Vagina (tissue), 2 donors: ENCODE measurements at regions of chr11 and their contacts with region 1.

Region 1: GRCh38 chr11:73242251-73243079 is 24.4 kb downstream of the P2RY2 start:
- DNase-seq: no peak
- H3K4me3 ChIP-seq: peak overlapping the region; percentile 6 to 15
- H3K27ac ChIP-seq: no peak overlapping the region
- H3K4me1 ChIP-seq: peaks cover 22% of the 10 kb centered on the region
- H3K27me3 ChIP-seq: no peaks in the 10 kb centered on the region
- CTCF ChIP-seq: peak; percentile 60 to 82 (median 78)
- POLR2A ChIP-seq: no peak

Region 2: GRCh38 chr11:73184953-73185671 is 57.4 kb before region 1 on chr11:
- intact Hi-C with region 1: loop called (anchors 5 kb)
- DNase-seq: no peak
- H3K4me3 ChIP-seq: no peak overlapping the region
- H3K27ac ChIP-seq: peak overlapping the region; percentile 56
- H3K4me1 ChIP-seq: peaks cover 25% of the 10 kb centered on the region
- H3K27me3 ChIP-seq: no peaks in the 10 kb centered on the region
- CTCF ChIP-seq: peak; percentile 48 to 70 (median 65)
- POLR2A ChIP-seq: no peak